ENCODE measurements at regions of chr7 and their contacts with region 1.

Region 1: GRCh38 chr7:99120501-99120900 is 23.4 kb downstream of the SMURF1 start:
- DNase-seq: no peak
- H3K4me3 ChIP-seq: no peak overlapping the region
- H3K27ac ChIP-seq: no peak overlapping the region
- H3K4me1 ChIP-seq: peaks cover 6% of the 10 kb centered on the region
- CTCF ChIP-seq: no peak

Region 2: DNA sequence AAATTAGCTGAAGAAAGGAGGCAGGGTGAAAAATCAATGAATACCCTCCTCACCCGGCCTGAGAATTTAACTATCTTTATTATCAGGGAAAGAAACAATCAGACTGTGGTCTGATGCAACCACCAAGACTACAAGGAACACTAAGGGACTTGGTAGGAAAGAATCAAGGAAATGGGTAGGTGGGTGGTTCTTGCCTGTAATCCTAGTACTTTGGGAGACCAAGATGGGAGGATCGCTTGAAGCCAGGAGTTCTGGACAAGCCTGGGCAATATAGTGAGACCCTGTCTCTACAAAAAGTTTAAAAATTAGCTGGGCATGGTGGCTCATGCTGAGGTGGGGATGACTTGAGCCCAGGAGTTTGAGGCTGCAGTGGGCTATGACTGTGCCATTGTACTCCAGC is 10.8 kb after region 1 on chr7:
- CTCF ChIA-PET with region 1: no interaction called
- POLR2A ChIA-PET with region 1: interaction called, 10 read pairs
- intact Hi-C with region 1: no loop called
- DNase-seq: no peak
- H3K4me3 ChIP-seq: no peak overlapping the region
- H3K27ac ChIP-seq: no peak overlapping the region
- H3K4me1 ChIP-seq: peaks cover 6% of the 10 kb centered on the region
- CTCF ChIP-seq: no peak

Measured in OCI-LY7 (cell line).